ENCODE measurements at regions of chr7 and their contacts with region 1.

Region 1: GRCh38 chr7:83976295-83976694 is 218.3 kb downstream of the SEMA3A start:
- DNase-seq: no peak
- ATAC-seq: peak; percentile 64
- H3K4me3 ChIP-seq: no peak overlapping the region
- H3K27ac ChIP-seq: no peak overlapping the region
- H3K4me1 ChIP-seq: no peaks in the 10 kb centered on the region
- H3K27me3 ChIP-seq: no peaks in the 10 kb centered on the region
- CTCF ChIP-seq: peak; percentile 41 to 70 (median 64); a peak in 5 of 6 replicates
- POLR2A ChIP-seq: no peak
- RAD21 ChIP-seq: peak; percentile 83

Region 2: DNA sequence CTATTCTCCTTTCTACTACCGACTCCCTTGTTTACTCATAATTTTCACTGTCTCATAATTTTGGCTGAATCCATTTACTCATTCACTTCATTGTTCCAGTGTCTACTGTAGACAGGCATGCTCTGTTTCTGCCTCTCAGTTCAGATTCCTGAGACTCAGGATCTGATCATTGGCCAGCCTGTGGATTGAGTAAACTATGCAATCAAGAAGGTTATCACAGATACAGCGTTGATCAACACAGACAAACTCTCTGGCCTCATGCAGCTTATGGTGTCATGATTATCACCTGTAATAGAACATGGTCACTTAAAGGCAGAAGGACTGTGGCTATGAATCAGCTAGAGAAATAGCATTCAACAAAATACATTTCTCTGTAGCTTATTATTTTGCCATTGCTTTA is 413.3 kb before region 1 on chr7:
- CTCF ChIA-PET with region 1: no interaction called
- POLR2A ChIA-PET with region 1: no interaction called
- RAD21 ChIA-PET with region 1: no interaction called
- intact Hi-C with region 1: no loop called
- DNase-seq: no peak
- ATAC-seq: no peak
- H3K4me3 ChIP-seq: no peak overlapping the region
- H3K27ac ChIP-seq: no peak overlapping the region
- H3K4me1 ChIP-seq: no peaks in the 10 kb centered on the region
- H3K27me3 ChIP-seq: no peaks in the 10 kb centered on the region
- CTCF ChIP-seq: no peak
- POLR2A ChIP-seq: no peak
- RAD21 ChIP-seq: no peak

Region 3: GRCh38 chr7:83936056-83936708 is 40.1 kb before region 1 on chr7:
- CTCF ChIA-PET with region 1: no interaction called
- POLR2A ChIA-PET with region 1: no interaction called
- RAD21 ChIA-PET with region 1: no interaction called
- intact Hi-C with region 1: loop called (anchors 5 kb)
- DNase-seq: peak; percentile 69
- ATAC-seq: peak; percentile 87
- H3K4me3 ChIP-seq: no peak overlapping the region
- H3K27ac ChIP-seq: no peak overlapping the region
- H3K4me1 ChIP-seq: no peaks in the 10 kb centered on the region
- H3K27me3 ChIP-seq: no peaks in the 10 kb centered on the region
- CTCF ChIP-seq: peak; percentile 81 to 92 (median 89)
- POLR2A ChIP-seq: no peak
- RAD21 ChIP-seq: peak; percentile 91

Region 4: DNA sequence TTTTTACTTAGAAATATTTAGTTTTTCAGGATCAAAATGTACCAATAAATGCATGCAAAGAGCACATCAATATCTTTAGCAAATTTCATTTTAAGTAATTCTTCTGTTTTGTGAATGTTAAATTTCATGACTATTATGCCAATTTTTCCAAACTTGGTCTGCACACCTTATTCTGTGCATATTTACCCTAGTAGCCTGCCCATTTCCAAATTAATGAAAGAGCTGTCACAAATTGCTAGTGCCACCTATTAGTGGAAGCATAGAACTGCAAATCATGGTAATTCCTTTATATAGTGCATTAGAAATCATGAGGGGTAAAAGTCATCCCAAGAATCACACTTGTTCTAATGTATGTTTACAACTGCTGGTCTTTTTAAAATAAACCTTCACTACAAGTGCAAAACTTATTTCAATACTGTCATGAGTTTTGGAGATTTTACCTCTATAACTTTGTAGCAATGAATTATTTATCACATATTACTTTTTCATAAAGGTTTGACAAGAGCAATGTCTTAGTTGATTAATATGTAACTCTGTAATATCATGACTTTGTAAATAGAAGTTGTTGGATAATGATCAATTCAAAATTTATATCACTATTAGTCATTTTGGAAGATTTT is 212.6 kb after region 1 on chr7:
- CTCF ChIA-PET with region 1: no interaction called
- POLR2A ChIA-PET with region 1: no interaction called
- RAD21 ChIA-PET with region 1: no interaction called
- intact Hi-C with region 1: loop called (anchors 1 kb)
- DNase-seq: no peak
- ATAC-seq: peak; percentile 72
- H3K4me3 ChIP-seq: no peak overlapping the region
- H3K27ac ChIP-seq: no peak overlapping the region
- H3K4me1 ChIP-seq: peaks cover 5 to 27% of the 10 kb centered on the region in 2 experiments; a peak in 3 of 4 replicates
- H3K27me3 ChIP-seq: no peaks in the 10 kb centered on the region
- CTCF ChIP-seq: peak; percentile 35 to 64 (median 44); a peak in 5 of 6 replicates
- POLR2A ChIP-seq: no peak
- RAD21 ChIP-seq: peak; percentile 70

Region 5: GRCh38 chr7:84218681-84219080 is 242.4 kb after region 1 on chr7:
- CTCF ChIA-PET with region 1: no interaction called
- POLR2A ChIA-PET with region 1: no interaction called
- RAD21 ChIA-PET with region 1: no interaction called
- intact Hi-C with region 1: no loop called
- DNase-seq: no peak
- ATAC-seq: no peak
- H3K4me3 ChIP-seq: no peak overlapping the region
- H3K27ac ChIP-seq: no peak overlapping the region
- H3K4me1 ChIP-seq: no peaks in the 10 kb centered on the region
- H3K27me3 ChIP-seq: no peaks in the 10 kb centered on the region
- CTCF ChIP-seq: no peak
- POLR2A ChIP-seq: no peak
- RAD21 ChIP-seq: no peak

Region 6: DNA sequence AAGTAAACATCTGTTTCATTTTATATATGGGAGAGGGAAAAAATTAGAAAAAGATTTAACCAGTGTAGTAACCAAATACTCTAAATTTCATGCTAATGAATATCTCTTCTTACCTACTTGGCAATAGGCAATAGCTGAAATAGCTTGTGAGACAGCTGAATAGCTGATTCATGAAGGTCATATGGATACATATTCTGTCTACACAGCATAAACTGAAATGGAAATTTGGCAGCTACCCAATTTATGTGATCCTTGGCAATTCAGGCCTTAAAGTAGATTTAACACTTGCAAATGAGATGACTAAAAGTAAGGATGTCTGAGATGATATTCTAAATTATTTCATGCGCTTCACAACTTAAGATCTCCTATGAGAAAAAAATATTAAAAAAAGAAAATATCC is 479.5 kb after region 1 on chr7:
- CTCF ChIA-PET with region 1: no interaction called
- POLR2A ChIA-PET with region 1: no interaction called
- RAD21 ChIA-PET with region 1: no interaction called
- intact Hi-C with region 1: loop called (anchors 2 kb)
- DNase-seq: no peak
- ATAC-seq: no peak
- H3K4me3 ChIP-seq: no peak overlapping the region
- H3K27ac ChIP-seq: no peak overlapping the region
- H3K4me1 ChIP-seq: no peaks in the 10 kb centered on the region
- H3K27me3 ChIP-seq: no peaks in the 10 kb centered on the region
- CTCF ChIP-seq: no peak
- POLR2A ChIP-seq: no peak
- RAD21 ChIP-seq: no peak

Region 7: DNA sequence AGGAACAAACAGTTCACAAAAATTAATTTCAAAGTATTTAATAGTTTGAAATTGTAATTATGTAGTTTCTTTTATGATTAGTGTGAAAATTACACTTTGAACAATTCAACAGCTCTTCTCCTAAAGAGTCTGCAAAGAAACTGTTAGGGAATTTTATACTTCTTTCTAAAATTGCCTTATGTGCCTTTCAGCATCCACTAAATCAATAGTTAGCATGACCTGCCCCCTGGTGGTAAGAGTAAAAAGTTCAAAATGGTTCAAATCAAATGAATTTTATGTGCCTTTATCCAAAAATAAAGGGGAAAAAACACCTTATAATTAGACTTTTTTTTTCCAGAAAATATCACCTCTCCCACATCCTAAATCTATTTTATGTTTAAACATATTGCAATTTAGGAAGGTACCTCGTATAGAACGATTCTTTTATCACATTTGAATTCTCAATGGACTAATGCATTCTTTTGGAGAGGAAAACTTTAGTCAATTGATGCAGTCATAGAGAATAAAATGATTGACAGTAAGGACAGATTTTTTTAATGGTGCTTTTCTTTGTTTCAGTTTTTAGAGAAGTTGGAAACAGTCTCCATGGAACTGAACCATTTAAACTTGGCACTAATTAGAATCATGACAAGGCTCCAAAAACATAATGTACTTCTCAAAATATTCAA is 1046.9 kb after region 1 on chr7:
- CTCF ChIA-PET with region 1: interaction called, 14 read pairs
- POLR2A ChIA-PET with region 1: no interaction called
- RAD21 ChIA-PET with region 1: interaction called in 1 of 2 experiments, 3 read pairs
- intact Hi-C with region 1: loop called (anchors 1 kb)
- DNase-seq: peak; percentile 34
- ATAC-seq: no peak
- H3K4me3 ChIP-seq: no peak overlapping the region
- H3K27ac ChIP-seq: no peak overlapping the region
- H3K4me1 ChIP-seq: no peaks in the 10 kb centered on the region
- H3K27me3 ChIP-seq: no peaks in the 10 kb centered on the region
- CTCF ChIP-seq: peak; percentile 36 to 75 (median 70); a peak in 5 of 6 replicates
- POLR2A ChIP-seq: no peak
- RAD21 ChIP-seq: peak; percentile 83

Region 8: GRCh38 chr7:85840554-85840953 is 1864.3 kb after region 1 on chr7:
- CTCF ChIA-PET with region 1: no interaction called
- POLR2A ChIA-PET with region 1: no interaction called
- RAD21 ChIA-PET with region 1: no interaction called
- intact Hi-C with region 1: loop called (anchors 10 kb)
- DNase-seq: no peak
- ATAC-seq: no peak
- H3K4me3 ChIP-seq: no peak overlapping the region
- H3K27ac ChIP-seq: no peak overlapping the region
- H3K4me1 ChIP-seq: no peaks in the 10 kb centered on the region
- H3K27me3 ChIP-seq: no peaks in the 10 kb centered on the region
- CTCF ChIP-seq: no peak
- POLR2A ChIP-seq: no peak
- RAD21 ChIP-seq: no peak

Measured in HCT116 (cell line).